ENCODE measurements at regions of chr1 and their contacts with region 1.

Region 1: GRCh38 chr1:152001391-152002249 is 8.0 kb upstream of the S100A10 start:
- DNase-seq: peak; percentile 53 to 91 (median 76)
- H3K4me3 ChIP-seq: no peak overlapping the region
- H3K27ac ChIP-seq: peak overlapping the region in 2 of 59 donors; percentile 28 to 52
- H3K27me3 ChIP-seq: peaks cover 0 to 10% (median 0%) of the 10 kb centered on the region in 45 donors
- CTCF ChIP-seq: peak; percentile 80 to 97 (median 92)

Region 2: GRCh38 chr1:151888972-151889570 is 112.5 kb before region 1 on chr1:
- intact Hi-C with region 1: loop called in 1 of 2 experiments (anchors 2 kb)
- DNase-seq: no peak
- H3K4me3 ChIP-seq: no peak overlapping the region
- H3K27ac ChIP-seq: no peak overlapping the region
- H3K27me3 ChIP-seq: no peaks in the 10 kb centered on the region
- CTCF ChIP-seq: peak in 55 of 56 donors; percentile 24 to 69 (median 48)

Region 3: DNA sequence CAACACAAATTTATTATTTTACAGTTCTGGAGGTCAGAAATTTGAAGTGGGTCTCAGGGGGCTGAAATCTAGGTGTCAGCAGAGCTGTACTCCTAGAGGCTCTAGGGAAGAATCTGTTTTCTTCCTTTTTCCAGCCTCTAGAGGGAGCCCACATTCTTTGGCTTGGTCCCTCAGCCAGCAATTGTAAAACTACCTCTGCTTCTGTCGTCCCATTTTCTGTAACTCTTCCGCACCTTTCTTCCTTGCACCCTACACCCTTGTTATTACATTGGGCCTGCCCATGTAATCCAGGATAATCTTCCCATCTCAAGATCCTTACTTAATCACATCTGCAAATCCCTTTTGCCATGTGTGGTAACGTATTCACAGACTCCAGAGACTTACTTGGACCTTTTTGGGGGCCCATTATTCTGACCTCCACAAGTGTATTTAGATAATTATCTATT is 67.5 kb before region 1 on chr1:
- intact Hi-C with region 1: loop called (anchors 1 to 5 kb)
- DNase-seq: no peak
- H3K4me3 ChIP-seq: no peak overlapping the region
- H3K27ac ChIP-seq: no peak overlapping the region
- H3K27me3 ChIP-seq: peaks cover 0 to 25% (median 0%) of the 10 kb centered on the region in 45 donors
- CTCF ChIP-seq: peak; percentile 50 to 93 (median 78)

Region 4: DNA sequence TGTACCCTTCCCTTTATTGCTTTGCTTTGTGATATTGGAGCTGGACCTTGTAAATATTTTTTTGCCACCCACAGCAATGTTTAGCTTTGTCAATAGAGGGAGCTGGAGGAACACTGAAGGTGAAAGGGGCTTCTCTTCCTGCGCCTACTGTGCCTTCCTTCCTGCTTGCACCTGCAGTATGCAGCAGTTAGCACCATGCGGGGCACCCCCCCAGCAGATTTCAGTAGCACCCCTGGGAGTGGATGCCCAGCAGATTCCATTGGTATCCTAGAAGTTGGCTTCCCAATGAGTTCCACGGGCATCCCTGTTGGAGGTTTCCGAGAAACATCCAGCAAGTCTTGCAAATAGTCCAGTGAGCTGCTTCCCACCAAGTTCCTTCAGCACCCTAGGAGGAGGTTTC is 33.6 kb before region 1 on chr1:
- intact Hi-C with region 1: loop called in 1 of 2 experiments (anchors 5 kb)
- DNase-seq: no peak
- H3K4me3 ChIP-seq: no peak overlapping the region
- H3K27ac ChIP-seq: no peak overlapping the region
- H3K27me3 ChIP-seq: peaks cover 0 to 19% (median 2%) of the 10 kb centered on the region in 45 donors
- CTCF ChIP-seq: peak in 45 of 56 donors; percentile 13 to 70 (median 38)

Measured in dorsolateral prefrontal cortex (tissue), 120 donors.